ENCODE measurements at regions of chr16 and their contacts with region 1.

Region 1: GRCh38 chr16:11051879-11052808 is 107.8 kb downstream of the CLEC16A start:
- DNase-seq: peak; percentile 92
- H3K4me3 Mint-ChIP-seq: peak overlapping the region; percentile 51
- H3K27ac Mint-ChIP-seq: peak overlapping the region; percentile 97
- H3K4me1 Mint-ChIP-seq: peaks cover 95% of the 10 kb centered on the region
- H3K27me3 Mint-ChIP-seq: no peaks in the 10 kb centered on the region

Region 2: GRCh38 chr16:10964039-10964890 is 87.9 kb before region 1 on chr16:
- CTCF ChIA-PET with region 1: interaction called, 10 read pairs
- POLR2A ChIA-PET with region 1: interaction called, 28 read pairs
- DNase-seq: peak; percentile 87
- H3K4me3 Mint-ChIP-seq: peak overlapping the region; percentile 57
- H3K27ac Mint-ChIP-seq: peak overlapping the region; percentile 95
- H3K4me1 Mint-ChIP-seq: peaks cover 82% of the 10 kb centered on the region
- H3K27me3 Mint-ChIP-seq: no peaks in the 10 kb centered on the region

Region 3: GRCh38 chr16:10981697-10982216 is 70.4 kb before region 1 on chr16:
- CTCF ChIA-PET with region 1: interaction called, 12 read pairs
- POLR2A ChIA-PET with region 1: interaction called, 31 read pairs
- DNase-seq: peak; percentile 77
- H3K4me3 Mint-ChIP-seq: peak overlapping the region; percentile 60
- H3K27ac Mint-ChIP-seq: peak overlapping the region; percentile 87
- H3K4me1 Mint-ChIP-seq: peaks cover 90% of the 10 kb centered on the region
- H3K27me3 Mint-ChIP-seq: no peaks in the 10 kb centered on the region

Region 4: DNA sequence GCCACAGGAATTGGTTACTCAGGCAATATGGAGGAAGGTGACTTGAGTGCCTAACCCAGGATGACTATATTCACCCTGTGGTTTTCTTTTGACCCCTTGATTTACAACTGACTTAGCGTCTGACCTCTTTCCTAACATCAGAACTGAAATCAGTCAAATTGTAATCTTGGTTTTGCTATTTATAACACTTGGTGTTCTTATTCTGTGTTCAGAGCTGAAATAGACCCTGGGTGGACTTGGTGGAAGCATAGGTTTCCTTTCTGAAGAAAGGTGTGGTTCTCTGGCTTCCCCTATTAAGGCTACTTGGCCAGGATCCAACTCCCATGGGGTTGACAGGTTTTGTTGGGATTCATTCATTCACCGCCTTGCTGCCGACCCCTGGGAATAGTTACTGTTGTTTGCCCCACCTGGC is 27.0 kb before region 1 on chr16:
- CTCF ChIA-PET with region 1: interaction called, 3 read pairs
- POLR2A ChIA-PET with region 1: interaction called, 20 read pairs
- DNase-seq: no peak
- H3K4me3 Mint-ChIP-seq: no peak overlapping the region
- H3K27ac Mint-ChIP-seq: peak overlapping the region; percentile 56
- H3K4me1 Mint-ChIP-seq: peaks cover 30% of the 10 kb centered on the region
- H3K27me3 Mint-ChIP-seq: no peaks in the 10 kb centered on the region

Region 5: DNA sequence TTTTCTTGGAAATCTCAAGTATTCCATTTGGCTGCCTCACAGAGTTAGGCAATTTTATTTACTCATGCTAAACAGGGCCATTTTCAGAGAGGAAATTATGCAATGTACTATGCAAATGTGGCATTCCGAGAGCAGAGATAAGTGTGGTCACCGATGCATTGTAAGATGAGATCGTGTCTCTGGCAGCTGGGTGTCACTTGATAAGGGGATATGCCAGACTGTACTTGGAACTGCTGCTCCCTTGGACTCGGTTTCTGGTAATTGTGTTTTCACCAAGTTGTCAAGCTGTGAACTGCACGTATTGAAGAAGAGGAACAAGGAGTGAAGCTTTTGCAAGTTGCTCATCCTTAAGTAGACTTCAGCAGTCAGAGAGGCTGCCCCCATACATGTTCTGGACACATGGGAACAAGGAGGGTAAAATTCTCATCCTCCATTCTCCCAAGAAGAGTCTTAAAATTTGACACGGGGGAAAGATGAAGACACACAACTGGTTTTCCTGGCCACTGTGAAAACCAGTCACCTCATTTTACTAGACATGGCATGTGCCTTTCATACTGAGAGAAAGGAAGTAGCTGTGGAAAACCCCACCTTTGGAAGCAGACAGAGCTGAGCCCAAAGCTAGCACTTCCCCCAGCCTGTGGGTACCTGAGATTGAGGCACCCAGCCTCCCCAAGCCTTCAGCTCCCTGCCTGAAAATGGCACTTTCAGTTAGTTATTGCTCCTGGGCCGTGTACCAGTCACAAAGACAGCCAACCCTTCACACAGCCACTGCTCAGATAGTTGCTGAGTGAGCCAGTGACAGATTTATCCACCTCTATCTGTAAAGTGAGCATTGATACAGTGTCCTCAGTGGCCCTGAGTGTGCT is 53.1 kb after region 1 on chr16:
- CTCF ChIA-PET with region 1: interaction called, 18 read pairs
- POLR2A ChIA-PET with region 1: interaction called, 29 read pairs
- DNase-seq: peak; percentile 67
- H3K4me3 Mint-ChIP-seq: peak overlapping the region; percentile 19
- H3K27ac Mint-ChIP-seq: peak overlapping the region; percentile 90
- H3K4me1 Mint-ChIP-seq: peaks cover 83% of the 10 kb centered on the region
- H3K27me3 Mint-ChIP-seq: no peaks in the 10 kb centered on the region

Region 6: GRCh38 chr16:11224096-11224893 is 172.2 kb after region 1 on chr16:
- CTCF ChIA-PET with region 1: interaction called, 8 read pairs
- POLR2A ChIA-PET with region 1: interaction called, 24 read pairs
- DNase-seq: peak; percentile 85
- H3K4me3 Mint-ChIP-seq: peak overlapping the region; percentile 68
- H3K27ac Mint-ChIP-seq: peak overlapping the region; percentile 99
- H3K4me1 Mint-ChIP-seq: peaks cover 67% of the 10 kb centered on the region
- H3K27me3 Mint-ChIP-seq: no peaks in the 10 kb centered on the region